ENCODE measurements at regions of chr18 and their contacts with region 1.

Region 1: GRCh38 chr18:3209859-3210569 is 9.8 kb downstream of the MYOM1 start:
- DNase-seq: no peak
- ATAC-seq: peak in 1 of 8 donors; percentile 27
- H3K4me3 ChIP-seq: peak overlapping the region in 5 of 10 donors; percentile 8 to 65 (median 17)
- H3K27ac ChIP-seq: peak overlapping the region in 9 of 10 donors; percentile 18 to 96 (median 95)
- H3K4me1 ChIP-seq: peaks cover 3 to 67% (median 40%) of the 10 kb centered on the region in 9 donors
- H3K27me3 ChIP-seq: no peaks in the 10 kb centered on the region
- CTCF ChIP-seq: no peak

Region 2: DNA sequence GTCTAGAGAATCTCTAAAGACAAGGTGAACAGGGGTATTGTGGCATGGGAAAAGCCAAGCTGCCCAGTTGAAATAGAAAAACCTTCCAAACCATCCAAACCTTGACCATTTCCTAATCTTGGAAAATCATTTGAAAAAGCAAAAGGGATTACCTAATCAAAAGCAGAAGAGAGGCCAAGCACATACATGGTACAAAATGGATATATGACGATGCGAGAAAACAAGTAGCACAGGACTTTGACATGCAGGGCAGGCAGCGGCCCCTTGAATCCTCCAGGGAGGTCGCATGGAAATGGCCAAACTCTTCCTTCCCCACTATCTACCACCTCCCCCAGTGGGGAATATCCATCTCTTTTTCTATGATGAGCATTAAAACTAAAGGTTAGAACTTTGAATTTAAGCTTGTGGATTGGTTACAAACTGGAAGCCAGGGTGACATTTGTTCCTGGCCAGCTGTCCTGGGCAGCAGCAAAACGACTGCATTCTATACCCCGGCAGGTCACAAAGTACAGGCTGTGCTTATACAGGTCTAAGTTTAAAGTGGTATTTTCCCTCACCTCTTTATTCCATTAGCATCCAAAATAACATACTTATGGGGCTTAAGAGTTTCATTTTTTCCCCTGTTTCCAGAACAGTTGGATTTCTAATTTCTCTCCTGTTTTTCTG is 14.9 kb before region 1 on chr18:
- intact Hi-C with region 1: loop called in 1 of 10 experiments (anchors 2 kb)
- DNase-seq: no peak
- ATAC-seq: peak in 7 of 8 donors; percentile 19 to 84 (median 64)
- H3K4me3 ChIP-seq: peak overlapping the region in 1 of 10 donors; percentile 4
- H3K27ac ChIP-seq: peak overlapping the region in 9 of 10 donors; percentile 36 to 72 (median 62)
- H3K4me1 ChIP-seq: peaks cover 0 to 78% (median 29%) of the 10 kb centered on the region in 9 donors
- H3K27me3 ChIP-seq: no peaks in the 10 kb centered on the region
- CTCF ChIP-seq: no peak

Measured in heart right ventricle (tissue), 16 donors.